ENCODE measurements at regions of chr2 and their contacts with region 1.

Region 1: GRCh38 chr2:120912101-120912985 is 176.7 kb downstream of the GLI2 start:
- DNase-seq: peak; percentile 51 to 68
- ATAC-seq: no peak
- H3K4me3 ChIP-seq: no peak overlapping the region
- H3K27ac ChIP-seq: no peak overlapping the region
- H3K4me1 ChIP-seq: peaks cover 20% of the 10 kb centered on the region
- H3K27me3 ChIP-seq: no peaks in the 10 kb centered on the region
- CTCF ChIP-seq: no peak

Region 2: DNA sequence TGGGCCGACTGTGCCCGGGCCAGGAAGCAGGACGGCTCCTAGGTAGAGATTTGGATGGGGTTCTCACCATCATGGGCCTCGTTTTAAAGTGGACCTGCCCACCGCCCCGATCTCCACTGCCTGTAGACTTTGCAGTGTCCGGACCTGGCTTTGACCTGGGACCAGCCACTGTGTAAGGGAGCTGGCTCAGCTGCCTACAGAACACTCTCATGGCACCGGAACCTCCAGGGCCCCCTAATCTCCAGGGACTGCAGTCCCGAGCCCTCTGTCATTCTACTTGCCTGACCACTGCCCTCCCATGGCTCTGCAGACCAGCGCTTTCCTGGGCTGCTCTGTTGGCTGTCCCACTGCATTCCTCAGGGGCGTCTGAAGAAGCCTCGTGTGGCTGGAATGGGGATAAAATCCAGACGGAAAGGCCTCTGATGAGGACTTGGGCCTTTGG is 55.9 kb before region 1 on chr2:
- intact Hi-C with region 1: no loop called
- DNase-seq: no peak
- ATAC-seq: peak in 1 of 4 donors; percentile 22
- H3K4me3 ChIP-seq: no peak overlapping the region
- H3K27ac ChIP-seq: no peak overlapping the region
- H3K4me1 ChIP-seq: no peaks in the 10 kb centered on the region
- H3K27me3 ChIP-seq: no peaks in the 10 kb centered on the region
- CTCF ChIP-seq: peak; percentile 6

Region 3: DNA sequence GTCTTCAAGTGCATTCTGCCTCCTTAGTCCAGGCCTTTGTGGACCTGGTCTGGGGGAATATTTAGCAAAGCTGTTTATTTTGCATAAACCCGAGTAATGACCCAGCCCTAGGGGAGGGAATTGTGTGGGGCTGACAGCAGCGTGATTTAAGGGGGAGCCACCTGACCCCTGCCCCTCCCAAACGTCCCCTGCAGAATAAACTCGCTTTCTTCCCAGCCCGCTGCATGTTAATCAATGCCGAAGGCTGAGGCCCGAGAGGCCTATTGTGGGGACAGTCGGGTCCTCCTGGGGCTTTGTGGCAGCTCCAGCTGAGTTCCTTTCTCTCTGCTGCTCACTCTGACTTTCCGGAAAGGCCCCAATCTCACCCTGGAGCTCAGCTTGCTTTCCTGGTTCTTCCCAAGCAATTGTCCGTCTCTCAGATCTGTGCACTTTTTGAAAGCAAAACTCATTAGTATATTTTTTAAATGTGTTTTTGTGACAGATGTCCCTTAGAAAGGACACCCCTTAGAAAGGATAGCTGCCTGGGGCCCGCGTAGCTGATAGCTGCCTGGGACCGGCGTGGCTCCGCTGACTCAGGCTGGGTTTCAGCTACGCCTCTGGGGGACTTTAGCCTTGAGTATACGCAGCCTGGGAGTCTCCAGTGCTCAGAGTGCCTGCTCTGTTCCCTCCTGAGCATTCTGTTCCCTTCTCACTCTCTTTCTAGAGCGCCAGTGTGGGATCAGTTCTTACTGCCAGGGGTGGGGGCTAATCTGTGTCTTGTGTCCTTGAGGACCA is 18.3 kb before region 1 on chr2:
- intact Hi-C with region 1: loop called in 1 of 2 experiments (anchors 2 kb)
- DNase-seq: peak in 1 of 2 donors; percentile 55
- ATAC-seq: peak in 2 of 4 donors; percentile 5 to 12
- H3K4me3 ChIP-seq: no peak overlapping the region
- H3K27ac ChIP-seq: peak overlapping the region; percentile 82
- H3K4me1 ChIP-seq: peaks cover 31% of the 10 kb centered on the region
- H3K27me3 ChIP-seq: no peaks in the 10 kb centered on the region
- CTCF ChIP-seq: no peak

Region 4: DNA sequence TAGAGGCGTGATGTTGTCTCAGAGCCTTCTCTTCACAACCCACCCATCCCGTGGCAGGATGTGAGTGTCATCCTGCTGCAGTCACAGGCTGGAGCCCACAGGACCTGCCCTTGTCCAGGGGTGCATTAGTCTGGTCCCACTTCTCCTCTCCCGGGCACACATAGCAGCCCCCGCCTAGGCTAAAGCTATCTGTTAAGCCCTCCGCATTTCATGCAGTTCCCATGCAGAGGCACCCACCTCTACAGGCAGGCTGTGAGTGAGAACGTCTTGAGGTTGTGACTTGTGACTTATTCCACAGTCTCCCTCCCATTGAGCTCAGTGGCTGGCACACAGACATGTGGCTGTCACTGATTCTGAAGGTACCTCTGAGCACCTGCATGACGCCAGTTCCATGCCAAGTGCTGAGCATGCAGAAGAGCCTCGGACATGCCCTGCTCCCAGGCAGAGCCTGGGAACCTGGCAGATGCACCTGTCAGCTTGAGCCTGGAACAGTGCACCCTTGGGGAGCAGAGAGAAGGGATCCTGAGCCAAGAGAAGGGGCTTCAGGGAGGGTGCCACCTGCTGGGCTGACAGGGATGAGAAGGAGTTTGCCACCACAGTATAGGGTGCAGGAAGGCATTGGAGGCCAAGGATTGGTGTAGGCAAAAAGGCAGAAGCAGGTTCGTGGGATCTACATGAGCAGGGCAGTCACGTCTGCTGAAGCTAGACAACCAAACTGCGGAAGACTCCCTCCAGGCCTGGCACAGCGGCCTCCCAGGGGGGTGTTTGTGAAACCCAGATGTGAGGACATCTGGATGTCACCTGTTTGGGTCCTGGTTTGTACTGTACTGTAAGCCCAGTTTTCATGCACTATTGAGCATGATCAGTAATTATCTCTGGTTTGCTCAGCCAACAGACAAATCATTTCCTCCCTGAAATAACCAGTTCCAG is 36.9 kb after region 1 on chr2:
- intact Hi-C with region 1: no loop called
- DNase-seq: no peak
- ATAC-seq: peak; percentile 43 to 79 (median 62)
- H3K4me3 ChIP-seq: no peak overlapping the region
- H3K27ac ChIP-seq: no peak overlapping the region
- H3K4me1 ChIP-seq: peaks cover 13% of the 10 kb centered on the region
- H3K27me3 ChIP-seq: no peaks in the 10 kb centered on the region
- CTCF ChIP-seq: peak; percentile 28

Measured in psoas muscle (tissue), 8 donors.